K562 (cell line): ENCODE measurements at regions of chr9 and their contacts with region 1.

Region 1: DNA sequence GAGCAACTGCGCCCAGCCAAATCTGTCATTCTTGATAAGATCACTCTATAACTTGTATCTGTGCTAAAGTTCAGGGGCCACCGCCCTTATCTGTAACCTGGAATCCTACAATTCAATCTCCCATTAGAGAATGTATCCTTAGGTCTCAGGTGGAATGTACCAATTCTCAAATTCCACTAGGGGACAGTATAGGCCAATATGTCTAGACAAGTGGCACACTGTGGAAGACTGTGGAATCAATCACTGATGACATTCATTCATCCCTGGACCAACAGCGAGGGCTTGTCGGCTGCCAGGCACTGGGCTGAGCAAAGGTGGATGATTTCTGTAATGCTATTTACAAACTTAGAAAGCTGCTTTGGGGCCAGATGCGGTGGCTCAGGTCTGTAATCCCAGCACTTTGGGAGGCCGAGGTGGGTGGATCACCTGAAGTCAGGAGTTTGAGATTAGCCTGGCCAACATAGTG is 28.7 kb upstream of the MEGF9 start:
- DNase-seq: peak; percentile 38 to 74 (median 59)
- ATAC-seq: peak; percentile 99
- H3K4me3 ChIP-seq: no peak overlapping the region
- H3K27ac ChIP-seq: no peak overlapping the region
- H3K4me1 ChIP-seq: no peaks in the 10 kb centered on the region; a peak in 1 of 5 replicates
- H3K27me3 ChIP-seq: no peaks in the 10 kb centered on the region
- CTCF ChIP-seq: peak; percentile 81 to 95 (median 86)
- EP300 ChIP-seq: no peak
- POLR2A ChIP-seq: no peak
- RAD21 ChIP-seq: peak; percentile 78 to 94

Region 2: DNA sequence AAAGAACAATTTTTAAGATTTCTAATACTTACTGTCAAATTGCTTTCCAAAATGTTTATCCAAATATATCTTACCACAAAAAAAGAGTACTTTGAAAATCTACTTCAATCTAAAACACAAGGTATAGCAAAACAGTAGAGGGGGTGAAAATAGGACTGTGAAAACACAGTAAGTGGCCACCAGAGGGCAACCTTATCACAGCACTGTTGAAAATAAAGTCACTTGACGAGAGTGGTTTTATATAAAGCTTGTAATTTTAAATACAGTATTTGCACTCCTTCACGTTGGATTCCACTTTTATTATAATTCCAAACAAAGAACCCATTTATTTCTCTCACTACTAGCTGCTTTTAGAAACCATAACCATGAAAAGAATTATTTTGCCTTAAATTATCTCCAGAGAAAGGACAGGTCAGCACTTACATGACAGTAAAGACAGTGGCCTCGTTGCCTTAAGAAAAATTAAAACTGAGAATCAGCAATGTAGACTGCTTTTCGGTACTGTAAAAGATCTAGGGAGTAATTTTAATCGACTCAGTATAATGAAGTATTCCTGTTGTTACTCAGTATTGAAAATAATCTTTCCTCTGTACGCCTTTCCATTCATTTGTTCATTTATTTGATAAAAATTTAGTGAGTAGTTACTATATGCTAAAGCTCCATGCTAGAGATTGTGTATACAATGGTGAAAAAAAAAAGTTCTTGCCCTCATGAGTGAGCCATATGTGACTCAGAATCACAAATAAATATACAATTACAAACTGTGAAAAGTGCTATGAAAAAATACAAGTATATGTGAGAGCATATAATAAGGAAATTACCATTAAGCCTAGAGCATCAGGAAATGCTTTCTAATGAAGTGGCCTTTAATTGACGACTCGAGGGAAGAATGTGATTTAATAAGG is 123.0 kb before region 1 on chr9:
- CTCF ChIA-PET with region 1: interaction called, 3 read pairs
- POLR2A ChIA-PET with region 1: no interaction called
- in situ Hi-C with region 1: no loop called
- intact Hi-C with region 1: loop called (anchors 2 kb)
- DNase-seq: peak; percentile 69 to 78 (median 69)
- ATAC-seq: peak; percentile 95
- H3K4me3 ChIP-seq: no peak overlapping the region
- H3K27ac ChIP-seq: no peak overlapping the region
- H3K4me1 ChIP-seq: no peaks in the 10 kb centered on the region
- H3K27me3 ChIP-seq: no peaks in the 10 kb centered on the region
- CTCF ChIP-seq: peak; percentile 75 to 87 (median 81)
- EP300 ChIP-seq: no peak
- POLR2A ChIP-seq: no peak
- RAD21 ChIP-seq: peak; percentile 71 to 81

Region 3: GRCh38 chr9:120985810-120986222 is 242.8 kb after region 1 on chr9:
- CTCF ChIA-PET with region 1: no interaction called
- POLR2A ChIA-PET with region 1: no interaction called
- in situ Hi-C with region 1: no loop called
- intact Hi-C with region 1: loop called (anchors 5 kb)
- DNase-seq: peak; percentile 25 to 68 (median 28)
- ATAC-seq: peak; percentile 80
- H3K4me3 ChIP-seq: no peak overlapping the region
- H3K27ac ChIP-seq: no peak overlapping the region
- H3K4me1 ChIP-seq: peaks cover 0 to 13% of the 10 kb centered on the region in 2 experiments; a peak in 3 of 5 replicates
- H3K27me3 ChIP-seq: no peaks in the 10 kb centered on the region
- CTCF ChIP-seq: peak; percentile 41 to 79 (median 65); a peak in 5 of 6 replicates
- EP300 ChIP-seq: peak; percentile 32; the same call in 1 of the 2 replicates
- POLR2A ChIP-seq: no peak
- RAD21 ChIP-seq: peak; percentile 72 to 75

Region 4: DNA sequence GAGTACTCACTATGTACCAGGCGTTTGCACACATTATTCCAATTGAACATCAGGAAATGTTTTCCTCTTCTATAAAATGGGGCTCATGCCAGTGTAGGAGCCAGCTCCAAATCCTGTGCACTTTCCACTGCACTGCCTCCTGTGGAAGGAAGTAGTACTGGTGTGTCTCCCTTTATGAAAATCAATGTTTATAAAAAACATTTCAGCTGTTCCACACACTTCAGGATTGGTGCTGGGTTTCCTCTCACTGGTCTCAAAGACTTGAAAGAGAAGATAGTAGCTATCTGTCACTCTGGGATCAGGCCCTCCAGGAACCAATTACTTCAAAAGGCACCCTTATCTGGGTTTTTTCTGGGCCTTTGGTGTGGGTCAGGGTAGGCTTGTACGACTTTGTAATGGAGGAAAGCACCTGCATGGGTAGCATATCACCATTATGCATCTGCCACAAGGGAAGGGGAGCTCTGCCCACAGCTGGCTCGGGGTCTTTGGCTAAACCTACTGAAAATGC is 426.2 kb after region 1 on chr9:
- CTCF ChIA-PET with region 1: no interaction called
- POLR2A ChIA-PET with region 1: no interaction called
- in situ Hi-C with region 1: loop called (anchors 5 kb)
- intact Hi-C with region 1: no loop called
- DNase-seq: peak in 2 of 4 experiments; percentile 31 to 34
- ATAC-seq: peak; percentile 87
- H3K4me3 ChIP-seq: no peak overlapping the region
- H3K27ac ChIP-seq: no peak overlapping the region
- H3K4me1 ChIP-seq: no peaks in the 10 kb centered on the region
- H3K27me3 ChIP-seq: no peaks in the 10 kb centered on the region
- CTCF ChIP-seq: peak; percentile 32 to 46 (median 42); a peak in 5 of 6 replicates
- EP300 ChIP-seq: no peak
- POLR2A ChIP-seq: no peak
- RAD21 ChIP-seq: 0 out of 4 replicates have a peak, but pooled peaks of 1 of the 2 experiments have one; percentile 15

Region 5: GRCh38 chr9:121399883-121400607 is 657.1 kb after region 1 on chr9:
- CTCF ChIA-PET with region 1: no interaction called
- POLR2A ChIA-PET with region 1: no interaction called
- in situ Hi-C with region 1: no loop called
- intact Hi-C with region 1: loop called (anchors 5 kb)
- DNase-seq: peak; percentile 42 to 77 (median 46)
- ATAC-seq: peak; percentile 79
- H3K4me3 ChIP-seq: no peak overlapping the region
- H3K27ac ChIP-seq: no peak overlapping the region
- H3K4me1 ChIP-seq: peaks cover 0 to 5% of the 10 kb centered on the region in 2 experiments; a peak in 2 of 5 replicates
- H3K27me3 ChIP-seq: no peaks in the 10 kb centered on the region
- CTCF ChIP-seq: peak; percentile 43 to 86 (median 71); a peak in 3 of 6 replicates
- EP300 ChIP-seq: no peak
- POLR2A ChIP-seq: no peak
- RAD21 ChIP-seq: peak; percentile 93 to 96